Posterior cingulate gyrus (tissue), 11 donors: ENCODE measurements at regions of chr4 and their contacts with region 1.

Region 1: DNA sequence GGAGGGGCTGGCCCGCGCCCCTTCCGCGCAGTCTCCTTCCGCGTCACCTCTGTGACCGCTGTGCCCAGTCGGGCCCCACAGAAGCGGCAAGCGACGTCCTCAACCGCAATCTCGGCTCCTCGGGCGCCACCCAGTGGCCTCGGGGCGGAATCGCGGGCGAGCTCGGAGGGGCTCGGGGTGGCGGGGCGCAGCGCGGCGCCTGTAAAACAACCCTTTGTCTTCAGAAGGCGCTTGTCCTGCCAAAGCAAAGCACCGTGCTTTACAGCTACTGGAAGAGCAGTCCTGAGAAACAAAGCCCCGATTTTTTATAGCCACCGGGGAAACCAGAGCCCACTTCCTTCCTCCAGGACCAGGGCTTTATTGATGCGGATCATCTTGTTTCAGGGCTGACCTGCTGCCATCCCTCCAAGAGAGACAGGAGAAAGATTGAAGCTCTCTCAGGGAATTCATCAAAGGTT is 37.3 kb upstream of the CDKN2AIP start:
- DNase-seq: peak; percentile 77 to 99 (median 92)

Region 2: DNA sequence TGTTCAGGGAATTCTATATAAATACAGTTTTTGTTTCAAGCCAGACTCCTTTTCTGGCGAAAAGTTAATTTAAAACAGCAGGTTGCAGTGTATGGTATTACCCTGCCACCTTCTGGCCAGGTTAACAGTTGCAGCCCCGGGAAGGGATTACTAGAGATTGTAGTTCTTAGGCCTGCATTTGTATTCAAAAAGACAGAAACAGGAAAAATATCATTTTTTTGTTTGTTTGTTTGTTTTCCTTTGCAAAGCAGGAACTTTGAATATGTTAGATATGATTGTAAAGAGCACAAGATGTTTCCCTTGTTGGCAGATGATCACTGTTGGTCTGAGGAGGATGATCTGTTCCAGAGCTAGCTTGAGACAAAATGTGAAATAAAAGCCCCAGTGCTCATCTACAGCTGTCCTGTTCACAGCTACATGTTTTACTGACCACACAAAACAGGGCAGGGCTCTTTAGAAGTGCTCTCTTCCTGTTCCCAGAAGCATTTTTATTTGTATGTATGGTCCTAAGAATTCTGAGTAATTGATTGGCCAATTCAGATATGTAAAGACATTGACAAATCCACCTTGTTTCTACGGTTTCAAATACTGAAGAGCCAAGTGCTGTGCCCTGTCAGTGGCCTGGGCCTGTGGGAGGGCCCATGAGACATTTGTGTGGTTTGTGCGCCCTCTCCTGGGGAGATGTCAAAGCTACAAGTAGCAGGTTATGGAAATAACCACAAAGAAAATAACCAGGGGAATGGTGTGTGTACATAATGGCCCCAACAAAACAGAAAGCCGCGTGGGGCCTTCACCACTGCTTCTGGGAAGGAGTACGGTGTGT is 145.0 kb before region 1 on chr4:
- intact Hi-C with region 1: loop called (anchors 2 kb)
- DNase-seq: peak; percentile 47 to 96 (median 86)

Region 3: GRCh38 chr4:183444214-183445066 is 37.3 kb after region 1 on chr4 and contains the start of gene CDKN2AIP:
- intact Hi-C with region 1: loop called (anchors 2 kb)
- DNase-seq: peak; percentile 85 to 98 (median 88)

Region 4: DNA sequence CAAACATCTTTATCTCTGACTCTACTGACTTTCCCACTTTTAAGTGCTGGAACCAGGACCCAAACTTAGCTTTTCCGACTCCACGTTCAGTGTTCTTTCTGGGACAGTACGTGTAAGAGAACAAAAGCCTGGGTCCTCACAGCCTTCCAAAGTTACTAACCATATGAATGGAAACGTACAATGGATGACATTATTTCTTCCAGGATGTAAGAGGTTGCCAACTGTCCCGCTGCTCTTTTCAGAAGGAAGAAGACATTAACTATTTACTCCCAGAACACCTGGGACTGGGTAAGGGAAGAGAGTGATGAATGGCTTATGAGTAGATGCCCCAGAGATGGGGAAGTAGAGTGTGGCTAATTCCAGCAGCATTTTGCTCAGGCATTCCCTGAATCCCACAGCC is 366.6 kb after region 1 on chr4:
- intact Hi-C with region 1: no loop called
- DNase-seq: no peak